CD4-positive, alpha-beta T cell (primary cell): ENCODE measurements at regions of chr10 and their contacts with region 1.

Region 1: DNA sequence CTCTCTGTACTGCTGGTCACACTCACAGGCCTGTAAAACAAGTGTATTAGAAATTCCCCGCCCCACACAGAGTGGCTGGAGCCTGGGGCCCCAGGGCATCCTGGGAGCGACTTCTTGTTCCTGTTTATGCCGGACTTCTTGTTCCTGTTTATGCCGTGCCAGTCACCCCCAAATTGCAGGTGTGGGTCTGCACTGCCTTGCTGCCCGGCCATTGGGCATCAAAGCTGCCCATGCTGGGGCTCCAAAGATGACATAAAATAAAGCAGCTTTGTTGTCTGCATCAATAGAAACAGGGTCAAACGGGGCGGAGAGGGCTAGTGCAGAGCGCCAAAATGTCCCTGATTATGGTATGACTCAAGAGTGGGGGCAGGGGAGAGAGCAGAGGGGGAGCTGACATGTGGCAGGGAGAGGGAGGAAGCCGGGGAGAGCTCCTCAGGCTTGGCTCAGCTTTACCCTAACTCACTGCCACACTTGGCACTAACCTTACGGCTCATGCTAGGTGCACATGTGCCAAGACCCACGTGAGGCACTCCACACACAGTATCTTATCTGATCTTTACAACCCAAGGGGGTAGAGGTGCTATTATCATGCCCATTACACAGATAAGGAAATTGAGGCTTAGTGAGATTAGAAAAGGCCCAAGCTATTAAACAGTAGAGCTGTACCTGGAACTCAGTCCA is 98.4 kb downstream of the PIP4K2A start:
- DNase-seq: peak in 8 of 14 experiments; percentile 22 to 78 (median 44)
- ATAC-seq: peak; percentile 29
- H3K4me3 ChIP-seq: peak overlapping the region; percentile 31
- H3K4me3 Mint-ChIP-seq: peak overlapping the region; percentile 58
- H3K27ac ChIP-seq: peak overlapping the region in 1 of 2 donors; percentile 68
- H3K27ac Mint-ChIP-seq: peak overlapping the region; percentile 98
- H3K4me1 ChIP-seq: peaks cover 80% of the 10 kb centered on the region
- H3K4me1 Mint-ChIP-seq: peaks cover 98% of the 10 kb centered on the region
- H3K27me3 ChIP-seq: no peaks in the 10 kb centered on the region
- H3K27me3 Mint-ChIP-seq: no peaks in the 10 kb centered on the region
- CTCF ChIP-seq: no peak

Region 2: DNA sequence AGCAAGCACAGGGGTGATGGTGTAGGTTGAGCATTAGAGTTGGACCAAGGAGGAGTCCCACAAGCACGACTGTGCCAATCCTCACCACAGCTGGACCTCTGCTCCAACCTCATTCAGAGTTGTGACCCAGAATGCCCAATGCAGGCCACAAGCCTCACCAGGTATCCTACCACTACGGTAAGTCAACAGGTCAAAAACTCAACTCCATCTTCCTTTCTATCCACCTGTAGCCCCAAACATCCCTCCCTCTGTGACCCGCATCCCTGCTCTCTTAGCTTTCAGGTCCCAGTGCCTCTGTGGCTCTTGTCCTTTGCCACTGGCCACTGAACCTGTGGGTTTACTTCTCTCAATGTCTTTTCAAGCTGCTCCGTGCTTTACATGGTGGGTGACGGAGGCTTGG is 14.3 kb before region 1 on chr10:
- CTCF ChIA-PET with region 1: interaction called, 5 read pairs
- POLR2A ChIA-PET with region 1: interaction called, 13 read pairs
- intact Hi-C with region 1: no loop called
- DNase-seq: no peak
- ATAC-seq: no peak
- H3K4me3 ChIP-seq: no peak overlapping the region
- H3K4me3 Mint-ChIP-seq: peak overlapping the region; percentile 67
- H3K27ac ChIP-seq: peak overlapping the region; percentile 13 to 45
- H3K27ac Mint-ChIP-seq: peak overlapping the region; percentile 98
- H3K4me1 ChIP-seq: peaks cover 86% of the 10 kb centered on the region
- H3K4me1 Mint-ChIP-seq: peaks cover 93% of the 10 kb centered on the region
- H3K27me3 ChIP-seq: no peaks in the 10 kb centered on the region
- H3K27me3 Mint-ChIP-seq: no peaks in the 10 kb centered on the region
- CTCF ChIP-seq: no peak

Region 3: DNA sequence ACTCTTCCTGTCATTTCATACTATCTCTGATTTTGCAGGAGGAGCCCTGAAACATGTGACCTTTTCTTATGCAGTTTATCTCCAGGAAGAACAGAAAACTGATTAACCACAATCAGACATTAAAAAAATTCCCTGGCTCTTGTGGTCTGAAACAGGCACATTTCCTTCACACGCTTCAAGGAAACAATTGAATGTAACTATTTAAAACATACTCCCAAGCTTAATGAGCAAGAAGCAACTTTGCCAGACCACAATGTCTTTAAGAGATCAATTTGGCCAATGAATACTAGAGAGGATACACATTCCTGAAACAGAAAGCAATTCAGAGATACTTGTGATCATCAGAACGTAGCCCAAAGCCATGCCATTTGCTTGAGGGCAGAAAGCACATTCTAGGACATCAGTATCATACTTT is 32.6 kb after region 1 on chr10:
- CTCF ChIA-PET with region 1: interaction called, 4 read pairs
- POLR2A ChIA-PET with region 1: interaction called, 16 read pairs
- intact Hi-C with region 1: loop called in 1 of 2 experiments (anchors 5 kb)
- DNase-seq: peak in 3 of 14 experiments; percentile 50 to 60 (median 53)
- ATAC-seq: no peak
- H3K4me3 ChIP-seq: no peak overlapping the region
- H3K4me3 Mint-ChIP-seq: peak overlapping the region; percentile 68
- H3K27ac ChIP-seq: peak overlapping the region; percentile 55 to 58
- H3K27ac Mint-ChIP-seq: peak overlapping the region; percentile 91
- H3K4me1 ChIP-seq: peaks cover 91% of the 10 kb centered on the region
- H3K4me1 Mint-ChIP-seq: peaks cover 91% of the 10 kb centered on the region
- H3K27me3 ChIP-seq: no peaks in the 10 kb centered on the region
- H3K27me3 Mint-ChIP-seq: no peaks in the 10 kb centered on the region
- CTCF ChIP-seq: no peak

Region 4: DNA sequence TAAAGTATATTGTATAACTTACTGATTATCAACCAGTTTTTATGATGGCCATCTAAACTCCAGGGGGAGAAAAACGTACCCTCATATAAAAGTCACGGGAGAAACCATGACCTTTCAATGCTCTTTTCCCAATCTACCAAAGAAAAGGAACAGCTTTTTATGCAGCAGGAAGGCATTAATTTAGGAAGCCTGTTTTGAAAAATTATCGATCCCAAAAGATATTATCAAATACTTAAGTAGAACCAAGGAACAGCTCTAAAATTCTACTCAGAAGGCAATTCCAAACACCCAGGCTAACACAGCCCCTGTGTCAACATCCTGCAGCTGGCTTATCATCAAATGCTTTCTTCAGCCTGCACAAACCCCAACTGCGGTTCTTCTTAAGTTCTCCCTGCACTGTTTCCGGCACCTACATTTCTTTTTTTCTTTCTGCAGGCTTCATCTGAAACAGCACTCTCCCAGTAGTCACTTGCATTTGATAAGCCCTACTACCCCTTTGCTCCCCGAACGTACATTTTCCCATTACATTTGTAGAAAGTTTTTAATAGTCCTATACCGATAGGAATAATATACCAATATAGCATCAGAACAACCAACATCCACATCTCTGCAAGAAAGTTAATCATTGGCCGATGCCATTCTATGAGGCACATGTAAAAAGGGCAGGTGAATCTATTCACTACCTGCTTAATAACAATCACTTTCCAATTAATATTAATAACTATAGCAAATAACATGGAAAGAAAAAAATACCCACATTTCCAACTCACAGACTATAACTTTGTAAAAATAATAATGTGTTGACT is 50.5 kb after region 1 on chr10:
- CTCF ChIA-PET with region 1: interaction called, 3 read pairs
- POLR2A ChIA-PET with region 1: interaction called, 27 read pairs
- intact Hi-C with region 1: loop called in 1 of 2 experiments (anchors 2 kb)
- DNase-seq: peak in 13 of 14 experiments; percentile 34 to 91 (median 58)
- ATAC-seq: peak; percentile 90
- H3K4me3 ChIP-seq: peak overlapping the region; percentile 45
- H3K4me3 Mint-ChIP-seq: peak overlapping the region; percentile 77
- H3K27ac ChIP-seq: peak overlapping the region; percentile 42 to 63
- H3K27ac Mint-ChIP-seq: peak overlapping the region; percentile 84
- H3K4me1 ChIP-seq: peaks cover 38% of the 10 kb centered on the region
- H3K4me1 Mint-ChIP-seq: peaks cover 83% of the 10 kb centered on the region
- H3K27me3 ChIP-seq: no peaks in the 10 kb centered on the region
- H3K27me3 Mint-ChIP-seq: no peaks in the 10 kb centered on the region
- CTCF ChIP-seq: no peak

Region 5: GRCh38 chr10:22682237-22683139 is 66.5 kb after region 1 on chr10:
- CTCF ChIA-PET with region 1: interaction called, 7 read pairs
- POLR2A ChIA-PET with region 1: interaction called, 28 read pairs
- intact Hi-C with region 1: loop called in 1 of 2 experiments (anchors 2 kb)
- DNase-seq: peak; percentile 23 to 88 (median 54)
- ATAC-seq: peak; percentile 57
- H3K4me3 ChIP-seq: peak overlapping the region; percentile 24
- H3K4me3 Mint-ChIP-seq: peak overlapping the region; percentile 61
- H3K27ac ChIP-seq: peak overlapping the region; percentile 66 to 75
- H3K27ac Mint-ChIP-seq: peak overlapping the region; percentile 99
- H3K4me1 ChIP-seq: peaks cover 75% of the 10 kb centered on the region
- H3K4me1 Mint-ChIP-seq: peaks cover 92% of the 10 kb centered on the region
- H3K27me3 ChIP-seq: no peaks in the 10 kb centered on the region
- H3K27me3 Mint-ChIP-seq: no peaks in the 10 kb centered on the region
- CTCF ChIP-seq: no peak

Region 6: GRCh38 chr10:22752272-22752889 is 136.4 kb after region 1 on chr10:
- CTCF ChIA-PET with region 1: no interaction called
- POLR2A ChIA-PET with region 1: no interaction called
- intact Hi-C with region 1: no loop called
- DNase-seq: no peak
- ATAC-seq: no peak
- H3K4me3 ChIP-seq: no peak overlapping the region
- H3K4me3 Mint-ChIP-seq: no peak overlapping the region
- H3K27ac ChIP-seq: no peak overlapping the region
- H3K27ac Mint-ChIP-seq: no peak overlapping the region
- H3K4me1 ChIP-seq: no peaks in the 10 kb centered on the region
- H3K4me1 Mint-ChIP-seq: peaks cover 12% of the 10 kb centered on the region
- H3K27me3 ChIP-seq: no peaks in the 10 kb centered on the region
- H3K27me3 Mint-ChIP-seq: no peaks in the 10 kb centered on the region
- CTCF ChIP-seq: no peak